ENCODE measurements at regions of chr3 and their contacts with region 1.

Region 1: GRCh38 chr3:55416351-55416821 is 70.7 kb downstream of the WNT5A start:
- DNase-seq: peak; percentile 94
- ATAC-seq: peak; percentile 98
- H3K4me3 ChIP-seq: no peak overlapping the region
- H3K27ac ChIP-seq: peak overlapping the region; percentile 73
- H3K4me1 ChIP-seq: peaks cover 25% of the 10 kb centered on the region
- H3K27me3 ChIP-seq: no peaks in the 10 kb centered on the region
- CTCF ChIP-seq: no peak

Region 2: GRCh38 chr3:55330355-55330754 is 86.0 kb before region 1 on chr3:
- CTCF ChIA-PET with region 1: no interaction called
- POLR2A ChIA-PET with region 1: no interaction called
- intact Hi-C with region 1: loop called (anchors 1 kb)
- DNase-seq: peak; percentile 94
- ATAC-seq: peak; percentile 97
- H3K4me3 ChIP-seq: peak overlapping the region; percentile 17; the same call in 1 of the 2 replicates
- H3K27ac ChIP-seq: peak overlapping the region; percentile 79
- H3K4me1 ChIP-seq: peaks cover 19% of the 10 kb centered on the region
- H3K27me3 ChIP-seq: no peaks in the 10 kb centered on the region
- CTCF ChIP-seq: no peak

Region 3: DNA sequence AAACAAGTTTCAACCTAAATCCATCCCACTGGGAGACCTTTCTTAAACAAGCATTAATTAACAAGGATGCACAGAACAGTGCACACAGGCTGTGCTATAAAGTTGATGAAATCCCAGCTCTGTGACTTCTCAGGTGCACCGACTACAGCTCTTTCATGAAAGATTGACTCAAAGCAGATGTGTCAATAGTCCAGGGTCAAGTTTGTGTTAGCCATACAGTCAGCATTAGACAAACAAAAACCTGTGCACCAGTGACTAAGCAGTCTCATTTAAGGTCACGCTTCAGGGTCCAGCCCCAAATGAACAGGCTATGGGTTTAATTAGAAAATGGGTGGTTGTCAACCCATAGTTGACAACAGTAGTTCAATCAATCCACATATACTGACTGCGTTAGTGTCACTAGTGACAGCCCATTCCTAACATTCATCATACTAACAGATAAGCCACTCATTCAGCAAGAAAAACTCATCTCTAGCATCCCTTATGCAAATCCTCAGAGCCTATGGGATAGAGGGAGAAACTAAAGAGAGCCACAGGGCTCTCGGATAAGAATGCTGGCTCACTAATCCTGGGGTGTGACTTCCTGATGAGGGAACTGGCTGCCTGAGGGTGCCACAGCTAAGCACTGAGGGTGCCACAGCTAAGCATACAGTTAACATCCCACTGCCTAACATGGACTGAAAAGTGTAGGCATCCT is 13.4 kb before region 1 on chr3:
- CTCF ChIA-PET with region 1: interaction called, 3 read pairs
- POLR2A ChIA-PET with region 1: no interaction called
- intact Hi-C with region 1: loop called (anchors 1 kb)
- DNase-seq: peak; percentile 83
- ATAC-seq: peak; percentile 91
- H3K4me3 ChIP-seq: peak overlapping the region; percentile 10; the same call in 1 of the 2 replicates
- H3K27ac ChIP-seq: peak overlapping the region; percentile 65
- H3K4me1 ChIP-seq: peaks cover 40% of the 10 kb centered on the region
- H3K27me3 ChIP-seq: no peaks in the 10 kb centered on the region
- CTCF ChIP-seq: no peak

Region 4: GRCh38 chr3:55453886-55454496 is 37.6 kb after region 1 on chr3:
- CTCF ChIA-PET with region 1: no interaction called
- POLR2A ChIA-PET with region 1: no interaction called
- intact Hi-C with region 1: loop called (anchors 1 kb)
- DNase-seq: no peak
- ATAC-seq: no peak
- H3K4me3 ChIP-seq: no peak overlapping the region
- H3K27ac ChIP-seq: no peak overlapping the region
- H3K4me1 ChIP-seq: peaks cover 7% of the 10 kb centered on the region; the same call in 1 of the 2 replicates
- H3K27me3 ChIP-seq: no peaks in the 10 kb centered on the region
- CTCF ChIP-seq: no peak

Region 5: GRCh38 chr3:55491296-55491816 is 75.0 kb after region 1 on chr3:
- CTCF ChIA-PET with region 1: no interaction called
- POLR2A ChIA-PET with region 1: no interaction called
- intact Hi-C with region 1: loop called (anchors 2 kb)
- DNase-seq: peak; percentile 99
- ATAC-seq: peak; percentile 25
- H3K4me3 ChIP-seq: no peak overlapping the region; the same call in 1 of the 2 replicates
- H3K27ac ChIP-seq: peak overlapping the region; percentile 65
- H3K4me1 ChIP-seq: peaks cover 47% of the 10 kb centered on the region
- H3K27me3 ChIP-seq: no peaks in the 10 kb centered on the region
- CTCF ChIP-seq: no peak

Region 6: GRCh38 chr3:55897573-55898224 is 481.3 kb after region 1 on chr3:
- CTCF ChIA-PET with region 1: no interaction called
- POLR2A ChIA-PET with region 1: no interaction called
- intact Hi-C with region 1: no loop called
- DNase-seq: peak; percentile 72
- ATAC-seq: peak; percentile 76
- H3K4me3 ChIP-seq: no peak overlapping the region
- H3K27ac ChIP-seq: no peak overlapping the region
- H3K4me1 ChIP-seq: peaks cover 16% of the 10 kb centered on the region
- H3K27me3 ChIP-seq: peaks cover 4% of the 10 kb centered on the region; the same call in 1 of the 2 replicates
- CTCF ChIP-seq: peak; percentile 87